Panc1 (cell line): ENCODE measurements at regions of chr19 and their contacts with region 1.

Region 1: GRCh38 chr19:38956264-38956663 is 19.3 kb downstream of the FBXO17 start:
- DNase-seq: no peak
- ATAC-seq: no peak
- H3K4me3 ChIP-seq: no peak overlapping the region
- H3K27ac ChIP-seq: no peak overlapping the region
- H3K4me1 ChIP-seq: no peaks in the 10 kb centered on the region
- H3K27me3 ChIP-seq: no peaks in the 10 kb centered on the region
- CTCF ChIP-seq: no peak

Region 2: DNA sequence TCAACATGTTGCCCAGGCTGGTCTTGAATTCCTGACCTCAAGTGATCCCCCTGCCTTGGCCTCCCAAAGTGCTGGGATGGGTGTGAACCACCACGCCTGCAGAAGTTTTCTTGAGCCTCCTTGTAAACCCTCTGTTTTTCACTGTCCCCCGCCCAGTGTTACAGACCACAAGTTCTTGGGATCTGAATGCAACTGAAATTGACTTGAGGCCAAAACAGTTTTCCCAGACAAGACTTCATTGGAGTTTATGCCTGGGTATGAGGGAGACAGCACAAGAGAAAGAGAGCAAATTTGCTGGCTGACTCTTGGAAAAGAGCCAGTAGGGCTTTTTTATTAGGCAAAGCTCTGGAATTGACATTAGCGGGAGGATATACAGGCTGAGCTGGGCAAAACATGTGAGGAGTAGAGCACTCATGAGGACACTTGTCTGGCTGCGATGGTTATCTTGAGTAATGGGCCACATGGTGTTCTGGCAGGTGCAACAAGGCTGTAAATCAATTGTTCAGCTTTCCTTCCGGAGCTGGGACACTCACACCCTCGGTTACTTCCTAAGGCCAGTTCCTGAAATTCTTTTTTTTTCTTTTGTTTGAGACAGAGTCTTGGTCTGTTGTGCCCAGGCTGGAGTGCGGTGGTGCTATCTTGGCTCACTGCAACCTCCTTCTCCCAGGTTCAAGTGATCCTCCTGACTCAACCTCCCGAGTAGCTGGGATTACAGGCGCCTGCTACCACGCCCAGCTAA is 93.8 kb before region 1 on chr19:
- CTCF ChIA-PET with region 1: interaction called, 14 read pairs
- POLR2A ChIA-PET with region 1: no interaction called
- in situ Hi-C with region 1: no loop called
- intact Hi-C with region 1: no loop called
- DNase-seq: no peak
- ATAC-seq: peak; percentile 39
- H3K4me3 ChIP-seq: no peak overlapping the region
- H3K27ac ChIP-seq: no peak overlapping the region
- H3K4me1 ChIP-seq: peaks cover 17% of the 10 kb centered on the region
- H3K27me3 ChIP-seq: no peaks in the 10 kb centered on the region
- CTCF ChIP-seq: no peak

Region 3: DNA sequence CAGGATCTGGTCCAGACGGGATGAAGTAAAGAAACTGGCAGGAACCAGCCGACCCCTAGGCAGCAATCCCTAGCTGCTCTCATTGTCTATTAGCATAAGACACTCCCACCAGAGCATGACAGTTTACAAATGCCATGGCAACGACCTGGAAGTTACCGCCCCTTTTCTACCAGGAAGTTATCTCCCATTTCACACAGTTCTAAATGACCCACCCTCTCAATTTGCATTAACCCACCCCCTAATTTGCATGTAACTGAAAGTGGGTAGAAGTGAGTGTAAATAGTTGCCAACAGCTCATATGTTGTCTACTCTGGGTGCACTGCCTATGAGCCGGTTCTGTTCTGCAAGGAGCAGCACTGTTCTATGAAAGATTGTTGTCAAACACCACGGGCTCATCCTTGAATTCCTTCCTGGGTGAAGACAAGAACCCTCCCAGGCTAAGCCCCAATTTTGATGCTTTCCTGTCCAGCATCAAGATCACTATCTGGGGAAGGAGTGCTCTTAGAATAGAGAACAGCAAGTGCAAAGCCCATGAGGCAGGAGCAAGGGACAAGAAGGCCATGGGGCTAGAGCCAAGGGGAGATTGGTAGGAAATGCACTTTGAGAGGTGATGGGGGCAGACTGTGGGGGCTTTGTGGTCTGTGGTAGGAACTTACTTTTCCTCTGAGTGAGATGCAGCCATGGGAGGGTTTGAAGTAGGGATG is 90.0 kb after region 1 on chr19:
- CTCF ChIA-PET with region 1: no interaction called
- POLR2A ChIA-PET with region 1: interaction called, 12 read pairs
- in situ Hi-C with region 1: no loop called
- intact Hi-C with region 1: no loop called
- DNase-seq: no peak
- ATAC-seq: peak; percentile 80
- H3K4me3 ChIP-seq: no peak overlapping the region
- H3K27ac ChIP-seq: no peak overlapping the region
- H3K4me1 ChIP-seq: peaks cover 7% of the 10 kb centered on the region; the same call in 1 of the 2 replicates
- H3K27me3 ChIP-seq: no peaks in the 10 kb centered on the region
- CTCF ChIP-seq: no peak